ENCODE measurements at regions of chr12 and their contacts with region 1.

Region 1: GRCh38 chr12:63068857-63069442 is 82.1 kb downstream of the AVPR1A start:
- DNase-seq: no peak
- H3K4me3 ChIP-seq: no peak overlapping the region
- H3K27ac ChIP-seq: no peak overlapping the region
- H3K4me1 ChIP-seq: no peaks in the 10 kb centered on the region
- H3K27me3 ChIP-seq: no peaks in the 10 kb centered on the region
- CTCF ChIP-seq: peak in 2 of 3 experiments; percentile 45 to 52; a peak in 2 of 4 replicates
- EP300 ChIP-seq: no peak
- POLR2A ChIP-seq: no peak
- RAD21 ChIP-seq: peak; percentile 74 to 80

Region 2: DNA sequence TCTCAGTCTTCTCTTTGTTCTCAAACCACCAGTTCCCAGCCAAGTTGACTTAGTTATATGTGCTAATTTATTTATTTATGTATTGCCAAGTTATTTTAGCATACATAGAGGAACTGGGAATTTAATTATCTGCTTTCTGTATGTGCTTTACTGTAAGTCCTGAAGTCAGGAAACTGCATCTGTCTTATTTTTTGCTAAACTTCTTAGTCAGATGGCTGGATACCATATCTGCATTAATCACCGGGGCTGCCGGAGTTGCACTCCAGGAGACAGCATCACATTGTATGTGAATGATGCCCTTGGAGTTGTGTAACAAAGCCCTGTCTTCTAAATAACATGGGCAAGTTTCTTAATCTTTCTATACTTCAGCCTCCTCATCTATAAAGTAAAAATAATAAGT is 506.1 kb before region 1 on chr12:
- CTCF ChIA-PET with region 1: no interaction called
- POLR2A ChIA-PET with region 1: no interaction called
- DNase-seq: no peak
- H3K4me3 ChIP-seq: no peak overlapping the region
- H3K27ac ChIP-seq: no peak overlapping the region
- H3K4me1 ChIP-seq: no peaks in the 10 kb centered on the region
- H3K27me3 ChIP-seq: no peaks in the 10 kb centered on the region
- CTCF ChIP-seq: no peak
- EP300 ChIP-seq: no peak
- POLR2A ChIP-seq: no peak
- RAD21 ChIP-seq: no peak

Region 3: GRCh38 chr12:62799126-62799736 is 269.7 kb before region 1 on chr12:
- CTCF ChIA-PET with region 1: interaction called, 65 read pairs
- POLR2A ChIA-PET with region 1: no interaction called
- DNase-seq: peak; percentile 50 to 88
- H3K4me3 ChIP-seq: no peak overlapping the region
- H3K27ac ChIP-seq: no peak overlapping the region
- H3K4me1 ChIP-seq: peaks cover 0 to 5% (median 0%) of the 10 kb centered on the region in 4 experiments; a peak in 3 of 7 replicates
- H3K27me3 ChIP-seq: no peaks in the 10 kb centered on the region
- CTCF ChIP-seq: peak; percentile 54 to 92 (median 90)
- EP300 ChIP-seq: no peak
- POLR2A ChIP-seq: no peak
- RAD21 ChIP-seq: peak; percentile 94 to 97

Region 4: GRCh38 chr12:62919838-62920237 is 149.1 kb before region 1 on chr12:
- CTCF ChIA-PET with region 1: interaction called, 10 read pairs
- POLR2A ChIA-PET with region 1: no interaction called
- DNase-seq: no peak
- H3K4me3 ChIP-seq: no peak overlapping the region
- H3K27ac ChIP-seq: no peak overlapping the region
- H3K4me1 ChIP-seq: peaks cover 2 to 17% (median 15%) of the 10 kb centered on the region in 4 experiments
- H3K27me3 ChIP-seq: no peaks in the 10 kb centered on the region
- CTCF ChIP-seq: no peak
- EP300 ChIP-seq: no peak
- POLR2A ChIP-seq: no peak
- RAD21 ChIP-seq: no peak

Region 5: DNA sequence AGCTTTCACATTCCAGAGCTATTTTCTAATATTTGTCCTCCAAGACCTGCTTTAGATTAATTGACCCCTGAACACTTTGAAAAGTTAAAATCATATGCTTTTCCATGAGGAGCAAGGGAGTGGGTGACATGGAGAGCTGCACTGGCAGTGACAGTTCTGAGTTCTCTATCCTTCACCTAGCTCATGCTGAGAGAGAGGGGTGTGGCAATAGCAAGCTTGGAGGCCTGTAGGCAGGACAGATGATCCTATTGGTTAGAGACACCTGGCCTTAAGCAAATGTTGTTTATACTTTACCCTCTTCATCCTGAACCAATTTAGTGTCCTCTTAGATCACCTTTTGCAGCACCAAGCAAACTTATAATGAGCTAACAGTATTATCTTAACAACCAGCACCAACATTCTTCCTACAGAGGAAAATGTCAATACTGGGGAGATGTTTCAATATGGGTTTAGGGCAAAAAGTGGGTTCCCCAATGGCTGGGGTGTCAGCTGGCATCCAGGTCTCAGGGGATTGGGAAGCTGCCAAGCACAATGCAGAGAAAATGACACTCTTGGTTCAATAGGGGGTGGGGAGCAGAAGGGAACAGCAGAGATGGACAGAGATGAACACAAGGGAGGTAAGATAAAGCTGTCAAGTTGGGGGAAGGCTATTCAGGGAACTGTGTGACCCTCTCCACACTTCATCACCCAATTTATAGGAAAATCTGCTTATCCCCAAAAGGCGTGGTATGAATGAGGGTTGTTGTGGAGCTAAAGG is 97.0 kb before region 1 on chr12:
- CTCF ChIA-PET with region 1: interaction called, 13 read pairs
- POLR2A ChIA-PET with region 1: no interaction called
- DNase-seq: no peak
- H3K4me3 ChIP-seq: no peak overlapping the region
- H3K27ac ChIP-seq: no peak overlapping the region
- H3K4me1 ChIP-seq: no peaks in the 10 kb centered on the region
- H3K27me3 ChIP-seq: no peaks in the 10 kb centered on the region; a peak in 1 of 7 replicates
- CTCF ChIP-seq: no peak
- EP300 ChIP-seq: no peak
- POLR2A ChIP-seq: no peak
- RAD21 ChIP-seq: no peak

Region 6: GRCh38 chr12:63056649-63057048 is 12.3 kb before region 1 on chr12:
- CTCF ChIA-PET with region 1: interaction called, 18 read pairs
- POLR2A ChIA-PET with region 1: no interaction called
- DNase-seq: no peak
- H3K4me3 ChIP-seq: no peak overlapping the region
- H3K27ac ChIP-seq: no peak overlapping the region
- H3K4me1 ChIP-seq: no peaks in the 10 kb centered on the region; a peak in 1 of 7 replicates
- H3K27me3 ChIP-seq: no peaks in the 10 kb centered on the region
- CTCF ChIP-seq: no peak
- EP300 ChIP-seq: no peak
- POLR2A ChIP-seq: no peak
- RAD21 ChIP-seq: no peak

Measured in H1 (cell line).